ENCODE measurements at regions of chr6 and their contacts with region 1.

Region 1: DNA sequence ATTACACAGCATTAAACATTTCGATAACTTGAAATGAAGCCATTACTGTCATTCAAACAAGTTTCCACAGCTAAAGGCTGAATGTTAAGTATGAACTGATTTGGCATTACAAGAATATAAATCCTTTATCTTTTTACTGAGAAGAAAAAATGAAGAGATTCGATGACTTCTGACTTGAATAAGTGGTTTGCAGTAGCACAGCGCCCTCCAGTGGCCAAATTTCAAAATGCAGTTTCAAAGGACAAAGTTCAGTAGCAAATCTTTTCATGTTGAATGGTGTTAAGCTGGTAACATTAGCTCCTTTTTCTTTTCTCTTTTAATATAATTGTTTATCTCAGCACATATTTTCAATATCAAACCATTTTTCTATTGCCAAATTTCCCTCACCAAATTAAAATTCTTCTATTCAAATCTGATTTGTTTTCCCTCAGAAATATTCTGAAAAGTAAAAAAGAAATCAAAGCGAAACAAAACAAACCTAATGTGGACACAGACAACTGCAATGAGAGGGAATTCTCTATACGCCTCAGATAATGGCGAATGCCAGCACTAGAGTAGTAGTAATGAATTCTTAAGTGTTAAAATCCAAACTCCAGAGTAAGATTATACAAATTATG is 145.7 kb downstream of the BTBD9 start:
- DNase-seq: peak; percentile 87
- H3K4me3 ChIP-seq: no peak overlapping the region
- H3K27ac ChIP-seq: no peak overlapping the region
- H3K4me1 ChIP-seq: no peaks in the 10 kb centered on the region
- H3K27me3 ChIP-seq: no peaks in the 10 kb centered on the region
- CTCF ChIP-seq: peak; percentile 56 to 59
- POLR2A ChIP-seq: no peak

Region 2: GRCh38 chr6:37791156-37791919 is 702.7 kb before region 1 on chr6:
- CTCF ChIA-PET with region 1: interaction called, 21 read pairs
- POLR2A ChIA-PET with region 1: no interaction called
- dilution Hi-C with region 1: no loop called
- intact Hi-C with region 1: loop called (anchors 1 kb)
- DNase-seq: peak; percentile 94
- H3K4me3 ChIP-seq: no peak overlapping the region
- H3K27ac ChIP-seq: no peak overlapping the region
- H3K4me1 ChIP-seq: peaks cover 5% of the 10 kb centered on the region
- H3K27me3 ChIP-seq: peaks cover 2% of the 10 kb centered on the region in 2 experiments
- CTCF ChIP-seq: peak; percentile 97 to 98
- POLR2A ChIP-seq: no peak

Region 3: DNA sequence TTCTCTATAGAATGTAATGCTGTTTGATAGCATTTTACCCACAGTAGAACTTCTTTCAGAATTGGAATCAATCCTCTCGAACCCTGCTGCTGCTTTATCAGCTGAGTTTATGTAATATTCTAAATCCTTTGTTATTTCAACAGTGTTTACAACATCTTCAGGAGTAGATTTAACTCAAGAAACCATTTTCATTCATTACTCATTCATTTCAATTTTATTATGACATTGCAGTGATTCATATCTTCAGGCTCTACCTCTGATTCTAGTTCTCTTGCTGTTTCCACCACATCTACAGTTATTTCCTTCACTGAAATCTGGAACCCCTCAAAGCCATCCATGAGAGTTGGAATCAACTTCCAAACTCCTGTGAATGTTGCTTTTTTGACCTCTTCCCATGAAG is 580.8 kb before region 1 on chr6:
- CTCF ChIA-PET with region 1: no interaction called
- POLR2A ChIA-PET with region 1: no interaction called
- dilution Hi-C with region 1: no loop called
- intact Hi-C with region 1: no loop called
- DNase-seq: no peak
- H3K4me3 ChIP-seq: no peak overlapping the region
- H3K27ac ChIP-seq: no peak overlapping the region
- H3K4me1 ChIP-seq: no peaks in the 10 kb centered on the region
- H3K27me3 ChIP-seq: no peaks in the 10 kb centered on the region
- CTCF ChIP-seq: no peak
- POLR2A ChIP-seq: no peak

Region 4: GRCh38 chr6:38110481-38110971 is 383.5 kb before region 1 on chr6:
- CTCF ChIA-PET with region 1: no interaction called
- POLR2A ChIA-PET with region 1: no interaction called
- dilution Hi-C with region 1: no loop called
- intact Hi-C with region 1: no loop called
- DNase-seq: no peak
- H3K4me3 ChIP-seq: no peak overlapping the region
- H3K27ac ChIP-seq: no peak overlapping the region
- H3K4me1 ChIP-seq: no peaks in the 10 kb centered on the region
- H3K27me3 ChIP-seq: no peaks in the 10 kb centered on the region
- CTCF ChIP-seq: no peak
- POLR2A ChIP-seq: no peak

Region 5: DNA sequence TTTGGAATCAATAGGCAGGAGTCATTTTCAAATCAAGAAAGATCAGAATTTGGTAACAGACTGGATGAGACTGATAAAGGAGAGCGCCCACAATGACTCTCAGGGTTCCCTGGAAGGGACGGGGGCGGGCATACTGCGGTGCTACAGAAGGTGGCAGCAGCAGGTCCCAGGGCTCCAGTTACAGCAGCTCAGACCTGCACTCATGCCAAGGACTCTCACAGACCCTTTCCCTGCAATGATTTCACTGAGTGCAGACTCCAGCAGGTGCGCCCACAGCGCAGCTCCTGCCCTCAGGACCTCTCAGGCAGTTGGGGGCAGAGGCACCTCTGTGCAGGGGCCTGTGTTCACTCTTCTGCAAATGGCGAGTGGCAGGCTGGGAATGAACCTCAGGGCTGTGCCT is 314.7 kb before region 1 on chr6:
- CTCF ChIA-PET with region 1: interaction called, 15 read pairs
- POLR2A ChIA-PET with region 1: no interaction called
- dilution Hi-C with region 1: no loop called
- intact Hi-C with region 1: loop called (anchors 5 kb)
- DNase-seq: no peak
- H3K4me3 ChIP-seq: no peak overlapping the region
- H3K27ac ChIP-seq: no peak overlapping the region
- H3K4me1 ChIP-seq: no peaks in the 10 kb centered on the region
- H3K27me3 ChIP-seq: no peaks in the 10 kb centered on the region
- CTCF ChIP-seq: peak in 1 of 2 donors; percentile 14
- POLR2A ChIP-seq: no peak

Region 6: GRCh38 chr6:38477680-38478260 is 16.3 kb before region 1 on chr6:
- CTCF ChIA-PET with region 1: interaction called, 33 read pairs
- POLR2A ChIA-PET with region 1: no interaction called
- dilution Hi-C with region 1: no loop called
- intact Hi-C with region 1: no loop called
- DNase-seq: no peak
- H3K4me3 ChIP-seq: no peak overlapping the region
- H3K27ac ChIP-seq: no peak overlapping the region
- H3K4me1 ChIP-seq: no peaks in the 10 kb centered on the region
- H3K27me3 ChIP-seq: no peaks in the 10 kb centered on the region
- CTCF ChIP-seq: no peak
- POLR2A ChIP-seq: no peak

Region 7: DNA sequence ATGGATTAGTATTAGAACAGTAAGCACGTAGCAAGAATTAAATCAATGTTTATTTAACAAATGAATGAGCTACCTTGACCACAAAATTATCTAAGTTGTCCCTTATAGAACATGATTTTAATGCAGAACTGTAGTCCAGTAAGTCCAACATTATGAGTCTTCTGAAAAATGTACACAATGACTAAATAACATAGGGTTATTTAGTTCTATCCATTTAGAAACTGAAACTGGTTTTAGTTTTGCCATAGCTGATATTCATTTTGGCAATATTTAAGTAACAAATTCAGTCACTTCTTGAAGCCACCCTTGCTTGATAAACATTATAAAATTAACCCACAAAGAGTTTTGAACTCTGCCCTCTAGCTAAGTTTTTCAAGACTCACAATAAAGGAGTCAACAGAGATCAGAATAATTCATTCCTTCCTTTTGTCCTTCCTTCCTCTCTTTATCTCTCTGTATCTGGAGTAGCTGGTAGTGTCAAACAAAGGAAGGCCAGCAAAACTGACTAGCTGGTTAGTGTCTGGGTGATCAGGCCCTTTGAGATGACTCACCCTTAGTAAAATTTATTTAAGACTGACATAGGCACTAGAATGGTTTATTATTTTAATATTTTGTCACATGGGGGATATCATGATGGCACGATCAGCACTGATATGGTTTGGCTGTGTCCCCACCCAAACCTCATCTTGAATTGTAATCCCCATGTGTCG is 30.6 kb after region 1 on chr6:
- CTCF ChIA-PET with region 1: interaction called, 10 read pairs
- POLR2A ChIA-PET with region 1: no interaction called
- dilution Hi-C with region 1: no loop called
- intact Hi-C with region 1: no loop called
- DNase-seq: peak; percentile 47
- H3K4me3 ChIP-seq: no peak overlapping the region
- H3K27ac ChIP-seq: no peak overlapping the region
- H3K4me1 ChIP-seq: peaks cover 9% of the 10 kb centered on the region
- H3K27me3 ChIP-seq: no peaks in the 10 kb centered on the region
- CTCF ChIP-seq: no peak
- POLR2A ChIP-seq: no peak

Region 8: GRCh38 chr6:38625217-38625616 is 131.2 kb after region 1 on chr6:
- CTCF ChIA-PET with region 1: no interaction called
- POLR2A ChIA-PET with region 1: no interaction called
- dilution Hi-C with region 1: no loop called
- intact Hi-C with region 1: no loop called
- DNase-seq: no peak
- H3K4me3 ChIP-seq: no peak overlapping the region
- H3K27ac ChIP-seq: no peak overlapping the region
- H3K4me1 ChIP-seq: no peaks in the 10 kb centered on the region
- H3K27me3 ChIP-seq: no peaks in the 10 kb centered on the region
- CTCF ChIP-seq: no peak
- POLR2A ChIP-seq: no peak

Measured in endothelial cell of umbilical vein (primary cell).